CD4-positive, alpha-beta memory T cell (primary cell): ENCODE measurements at regions of chr19 and their contacts with region 1.

Region 1: GRCh38 chr19:48333467-48334384 is 8.4 kb downstream of the EMP3 start:
- DNase-seq: peak; percentile 92 to 94 (median 93)
- H3K4me3 ChIP-seq: peak overlapping the region; percentile 81 to 93
- H3K4me3 Mint-ChIP-seq: peak overlapping the region; percentile 88 to 97 (median 94)
- H3K27ac ChIP-seq: peak overlapping the region; percentile 99
- H3K27ac Mint-ChIP-seq: peak overlapping the region; percentile 94 to 99 (median 98)
- H3K4me1 ChIP-seq: peaks cover 48% of the 10 kb centered on the region
- H3K4me1 Mint-ChIP-seq: peaks cover 23 to 60% (median 36%) of the 10 kb centered on the region in 4 donors
- H3K27me3 ChIP-seq: no peaks in the 10 kb centered on the region
- H3K27me3 Mint-ChIP-seq: no peaks in the 10 kb centered on the region

Region 2: DNA sequence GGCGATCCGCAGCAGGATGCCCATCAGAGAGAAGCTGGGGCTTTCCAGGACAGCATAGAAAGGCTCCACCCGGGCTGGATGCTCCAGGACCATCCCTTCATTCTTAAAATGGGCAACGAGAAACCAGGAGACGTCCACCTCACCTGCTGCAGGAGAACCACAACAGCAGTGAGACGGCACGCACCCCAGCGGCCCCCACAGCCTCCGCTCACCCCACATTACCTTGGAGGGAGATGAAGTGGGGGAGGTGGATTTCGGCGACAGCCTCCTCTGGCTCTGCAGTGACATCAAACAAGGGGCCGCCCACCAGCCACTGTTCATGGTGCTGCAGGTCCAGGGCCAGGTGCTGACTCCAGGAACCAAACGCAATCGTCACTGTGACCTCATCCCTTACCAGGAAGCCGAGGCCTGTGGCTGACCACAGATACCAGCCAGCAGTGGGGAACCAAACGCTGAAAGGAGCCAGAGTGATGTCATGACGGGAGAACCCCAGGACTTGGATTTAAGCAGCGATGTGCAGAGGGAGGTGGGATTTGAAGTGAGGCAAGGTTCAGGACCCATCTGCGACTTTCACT is 103.1 kb before region 1 on chr19:
- CTCF ChIA-PET with region 1: no interaction called
- POLR2A ChIA-PET with region 1: no interaction called
- intact Hi-C with region 1: no loop called
- DNase-seq: peak in 2 of 5 donors; percentile 16 to 49
- H3K4me3 ChIP-seq: no peak overlapping the region
- H3K4me3 Mint-ChIP-seq: no peak overlapping the region
- H3K27ac ChIP-seq: no peak overlapping the region
- H3K27ac Mint-ChIP-seq: peak overlapping the region in 6 of 7 donors; percentile 0 to 70 (median 50)
- H3K4me1 ChIP-seq: no peaks in the 10 kb centered on the region
- H3K4me1 Mint-ChIP-seq: peaks cover 6 to 15% (median 9%) of the 10 kb centered on the region in 4 donors
- H3K27me3 ChIP-seq: no peaks in the 10 kb centered on the region
- H3K27me3 Mint-ChIP-seq: no peaks in the 10 kb centered on the region

Region 3: GRCh38 chr19:48249502-48250014 is 84.2 kb before region 1 on chr19:
- CTCF ChIA-PET with region 1: no interaction called
- POLR2A ChIA-PET with region 1: interaction called, 13 read pairs
- intact Hi-C with region 1: no loop called
- DNase-seq: peak; percentile 74 to 88 (median 76)
- H3K4me3 ChIP-seq: peak overlapping the region; percentile 48 to 87
- H3K4me3 Mint-ChIP-seq: peak overlapping the region; percentile 91 to 97 (median 94)
- H3K27ac ChIP-seq: peak overlapping the region; percentile 93
- H3K27ac Mint-ChIP-seq: peak overlapping the region; percentile 98 to 99 (median 98)
- H3K4me1 ChIP-seq: peaks cover 89% of the 10 kb centered on the region
- H3K4me1 Mint-ChIP-seq: peaks cover 56 to 87% (median 69%) of the 10 kb centered on the region in 4 donors
- H3K27me3 ChIP-seq: no peaks in the 10 kb centered on the region
- H3K27me3 Mint-ChIP-seq: no peaks in the 10 kb centered on the region

Region 4: DNA sequence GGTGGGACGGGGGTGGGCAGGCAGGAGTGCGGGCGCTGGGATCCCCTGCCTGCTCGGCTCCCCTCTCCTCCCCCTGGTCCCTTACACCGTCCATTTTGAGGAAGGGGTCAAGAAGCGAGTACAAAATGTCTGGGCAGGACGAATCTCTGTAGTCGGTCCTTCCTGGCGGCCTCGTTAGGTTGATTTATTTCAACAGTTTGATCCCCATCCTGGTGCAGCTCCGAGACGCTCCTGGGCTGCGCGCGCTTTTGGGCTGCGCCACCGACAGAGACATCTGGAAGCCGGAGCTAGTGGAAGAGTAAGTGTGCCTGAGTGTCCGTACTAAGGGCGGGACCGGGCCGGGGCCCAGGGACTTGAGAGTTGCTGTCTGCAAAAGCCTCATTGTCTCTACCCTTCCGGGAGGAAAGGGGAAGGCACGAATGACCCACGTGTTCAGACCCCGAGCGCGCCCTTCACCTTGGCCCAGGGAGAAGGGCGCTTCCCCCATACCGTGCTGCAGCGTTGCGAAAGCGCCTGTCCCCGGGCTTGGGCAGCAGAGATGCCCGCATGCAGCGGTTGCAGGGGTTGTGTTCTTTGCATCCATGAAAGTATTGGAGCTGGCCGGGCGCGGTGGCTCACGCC is 62.1 kb before region 1 on chr19:
- CTCF ChIA-PET with region 1: interaction called, 9 read pairs
- POLR2A ChIA-PET with region 1: interaction called, 4 read pairs
- intact Hi-C with region 1: loop called (anchors 1 kb)
- DNase-seq: no peak
- H3K4me3 ChIP-seq: peak overlapping the region in 1 of 2 donors; percentile 19
- H3K4me3 Mint-ChIP-seq: peak overlapping the region; percentile 70 to 90 (median 80)
- H3K27ac ChIP-seq: no peak overlapping the region
- H3K27ac Mint-ChIP-seq: peak overlapping the region in 2 of 7 donors; percentile 63 to 70
- H3K4me1 ChIP-seq: peaks cover 4% of the 10 kb centered on the region
- H3K4me1 Mint-ChIP-seq: peaks cover 5 to 24% (median 15%) of the 10 kb centered on the region in 4 donors
- H3K27me3 ChIP-seq: no peaks in the 10 kb centered on the region
- H3K27me3 Mint-ChIP-seq: peaks cover 8 to 12% of the 10 kb centered on the region in 2 donors

Region 5: DNA sequence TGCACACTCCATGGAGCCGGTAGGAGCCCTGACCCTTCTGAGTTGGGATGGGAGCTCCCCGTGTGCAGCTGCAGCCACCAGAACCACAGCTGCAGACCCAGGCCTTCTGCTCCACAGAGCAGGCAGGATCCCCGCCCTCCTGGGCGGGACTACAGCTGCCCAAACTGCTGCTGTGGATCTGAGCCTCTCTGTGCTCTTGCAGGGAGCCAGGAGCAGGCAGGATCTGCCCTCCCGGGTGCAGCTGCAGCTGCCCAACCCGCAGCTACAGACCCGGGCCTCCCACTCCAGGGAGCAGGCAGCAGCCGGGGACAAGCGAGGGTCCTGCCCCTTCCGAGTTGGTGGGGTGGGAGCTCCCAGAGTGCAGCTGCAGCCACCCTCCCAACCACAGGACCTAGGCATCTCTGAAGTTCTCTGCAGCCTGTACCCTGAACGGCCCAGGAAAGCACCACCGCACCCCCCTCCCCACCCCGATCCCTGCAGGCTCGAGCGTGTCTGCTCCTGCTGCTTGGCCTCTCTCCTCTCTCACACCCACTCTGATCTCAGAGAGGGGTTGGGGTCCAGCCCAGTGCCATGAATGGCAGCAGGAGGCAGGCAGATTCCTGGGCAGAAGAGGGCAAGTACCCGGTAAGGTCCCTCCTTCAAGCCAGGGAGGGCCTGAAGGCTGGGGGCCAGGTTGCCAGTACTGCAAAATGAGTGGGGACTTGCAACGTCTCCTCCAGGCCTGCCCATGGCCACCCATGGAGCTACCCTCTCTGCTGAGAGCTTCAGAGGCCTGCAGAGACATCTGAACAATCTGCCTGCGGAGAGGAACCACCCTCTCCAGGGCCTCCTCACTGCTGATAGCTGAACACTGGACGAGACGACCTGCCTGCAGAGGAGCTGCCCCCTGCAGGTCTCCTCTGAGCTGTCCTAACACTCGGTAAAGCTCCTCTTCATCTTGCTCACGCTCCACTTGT is 24.8 kb before region 1 on chr19:
- CTCF ChIA-PET with region 1: interaction called, 49 read pairs
- POLR2A ChIA-PET with region 1: interaction called, 14 read pairs
- intact Hi-C with region 1: no loop called
- DNase-seq: no peak
- H3K4me3 ChIP-seq: no peak overlapping the region
- H3K4me3 Mint-ChIP-seq: no peak overlapping the region
- H3K27ac ChIP-seq: no peak overlapping the region
- H3K27ac Mint-ChIP-seq: no peak overlapping the region
- H3K4me1 ChIP-seq: no peaks in the 10 kb centered on the region
- H3K4me1 Mint-ChIP-seq: no peaks in the 10 kb centered on the region
- H3K27me3 ChIP-seq: no peaks in the 10 kb centered on the region
- H3K27me3 Mint-ChIP-seq: peaks cover 0 to 3% of the 10 kb centered on the region in 2 donors

Region 6: DNA sequence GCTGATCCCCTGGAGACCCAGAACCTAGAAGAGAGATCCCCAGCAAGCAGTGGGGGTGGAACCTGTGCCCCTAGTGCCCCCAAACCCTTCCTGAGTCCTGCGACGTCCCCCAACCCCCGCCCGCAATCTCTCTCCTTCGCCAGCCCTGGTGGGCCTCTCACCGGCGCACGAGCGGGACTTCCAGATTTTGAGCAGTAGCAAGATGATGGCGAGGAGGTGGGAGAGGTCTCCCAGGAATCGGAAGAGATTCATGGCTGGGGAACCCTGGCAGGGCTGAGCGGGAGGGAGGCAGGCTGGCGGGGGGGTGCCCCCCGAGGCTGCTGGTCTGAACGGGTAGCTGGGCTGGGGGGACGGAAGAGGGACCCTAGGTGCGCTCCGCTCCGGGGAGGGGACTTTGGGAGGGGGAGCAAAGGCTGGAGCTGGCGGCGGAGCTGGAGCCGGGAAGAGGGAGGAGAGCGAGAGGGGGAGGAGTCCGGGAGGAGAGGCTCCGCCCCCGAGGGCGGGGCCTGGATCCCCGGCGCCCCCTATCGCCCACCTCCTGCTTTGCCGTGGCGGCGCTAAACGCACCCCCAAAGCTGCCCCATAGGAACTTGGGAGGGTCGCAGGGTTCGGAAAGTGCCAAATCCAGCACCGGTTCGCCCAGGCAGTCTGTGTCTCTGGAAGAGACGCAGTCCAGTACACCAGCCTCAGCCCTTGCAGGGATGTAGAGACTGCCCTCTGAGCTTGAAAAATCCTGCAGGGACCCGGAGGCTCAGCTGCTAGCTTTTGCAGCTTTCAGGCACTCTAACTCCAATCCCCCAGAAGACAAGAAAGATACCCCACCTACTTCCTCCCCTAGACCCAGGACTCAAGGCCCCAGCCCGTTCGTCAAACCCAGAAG is 57.6 kb after region 1 on chr19 and contains the start of gene KDELR1:
- CTCF ChIA-PET with region 1: interaction called, 7 read pairs
- POLR2A ChIA-PET with region 1: interaction called, 20 read pairs
- intact Hi-C with region 1: no loop called
- DNase-seq: peak; percentile 59 to 79 (median 66)
- H3K4me3 ChIP-seq: peak within 1 kb of the TSS; percentile 63 to 89
- H3K4me3 Mint-ChIP-seq: peak within 1 kb of the TSS; percentile 91 to 95 (median 94)
- H3K27ac ChIP-seq: peak within 1 kb of the TSS; percentile 93
- H3K27ac Mint-ChIP-seq: peak within 1 kb of the TSS; percentile 89 to 98 (median 95)
- H3K4me1 ChIP-seq: peaks cover 41% of the 10 kb centered on the region
- H3K4me1 Mint-ChIP-seq: peaks cover 15 to 49% (median 33%) of the 10 kb centered on the region in 4 donors
- H3K27me3 ChIP-seq: peaks cover 19% of the 10 kb centered on the region
- H3K27me3 Mint-ChIP-seq: peaks cover 6 to 19% of the 10 kb centered on the region in 2 donors
- total RNA-seq, gene KDELR1: 58.8 to 63.2 TPM

Region 7: DNA sequence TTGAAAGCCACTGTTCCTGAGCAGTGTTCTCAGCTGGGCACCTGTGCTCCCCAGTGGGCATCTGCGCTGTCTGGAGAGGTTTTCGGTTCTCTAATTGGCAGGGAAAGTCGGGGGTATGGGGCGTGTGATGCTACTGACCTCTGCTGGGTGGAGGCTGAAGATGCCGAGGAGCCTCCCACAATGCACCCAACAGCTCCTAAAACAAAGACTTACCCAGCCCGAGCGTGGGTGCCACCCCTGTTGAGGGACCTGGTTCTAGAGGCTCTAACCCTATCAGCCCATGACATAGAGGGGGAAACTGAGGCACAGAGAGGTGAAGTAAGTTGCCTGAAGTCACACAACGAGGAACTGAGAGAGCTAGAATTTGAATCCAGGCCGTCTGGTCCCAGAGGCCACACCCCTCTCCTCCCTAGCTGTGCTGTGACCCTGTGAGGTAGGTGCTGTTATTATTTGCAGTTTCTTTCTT is 275.1 kb after region 1 on chr19:
- CTCF ChIA-PET with region 1: interaction called, 3 read pairs
- POLR2A ChIA-PET with region 1: interaction called, 7 read pairs
- intact Hi-C with region 1: loop called (anchors 1 kb)
- DNase-seq: peak; percentile 57 to 63 (median 60)
- H3K4me3 ChIP-seq: no peak overlapping the region
- H3K4me3 Mint-ChIP-seq: peak overlapping the region in 6 of 8 donors; percentile 24 to 73 (median 53)
- H3K27ac ChIP-seq: no peak overlapping the region
- H3K27ac Mint-ChIP-seq: peak overlapping the region in 5 of 7 donors; percentile 22 to 94 (median 73)
- H3K4me1 ChIP-seq: no peaks in the 10 kb centered on the region
- H3K4me1 Mint-ChIP-seq: peaks cover 2 to 6% (median 5%) of the 10 kb centered on the region in 4 donors
- H3K27me3 ChIP-seq: no peaks in the 10 kb centered on the region
- H3K27me3 Mint-ChIP-seq: no peaks in the 10 kb centered on the region

Region 8: GRCh38 chr19:48627211-48627938 is 293.6 kb after region 1 on chr19:
- CTCF ChIA-PET with region 1: no interaction called
- POLR2A ChIA-PET with region 1: no interaction called
- intact Hi-C with region 1: no loop called
- DNase-seq: peak in 1 of 5 donors; percentile 68
- H3K4me3 ChIP-seq: no peak overlapping the region
- H3K4me3 Mint-ChIP-seq: no peak overlapping the region
- H3K27ac ChIP-seq: no peak overlapping the region
- H3K27ac Mint-ChIP-seq: peak overlapping the region in 3 of 7 donors; percentile 30 to 63 (median 42)
- H3K4me1 ChIP-seq: peaks cover 16% of the 10 kb centered on the region
- H3K4me1 Mint-ChIP-seq: peaks cover 13 to 34% (median 27%) of the 10 kb centered on the region in 4 donors
- H3K27me3 ChIP-seq: no peaks in the 10 kb centered on the region
- H3K27me3 Mint-ChIP-seq: no peaks in the 10 kb centered on the region

Region 9: GRCh38 chr19:48887861-48888612 is 554.3 kb after region 1 on chr19:
- CTCF ChIA-PET with region 1: no interaction called
- POLR2A ChIA-PET with region 1: no interaction called
- intact Hi-C with region 1: no loop called
- DNase-seq: no peak
- H3K4me3 ChIP-seq: no peak overlapping the region
- H3K4me3 Mint-ChIP-seq: peak overlapping the region in 1 of 8 donors; percentile 48
- H3K27ac ChIP-seq: no peak overlapping the region
- H3K27ac Mint-ChIP-seq: no peak overlapping the region
- H3K4me1 ChIP-seq: no peaks in the 10 kb centered on the region
- H3K4me1 Mint-ChIP-seq: peaks cover 0 to 4% (median 0%) of the 10 kb centered on the region in 4 donors
- H3K27me3 ChIP-seq: no peaks in the 10 kb centered on the region
- H3K27me3 Mint-ChIP-seq: peaks cover 11 to 17% of the 10 kb centered on the region in 2 donors